ENCODE measurements at regions of chr13 and their contacts with region 1.

Region 1: DNA sequence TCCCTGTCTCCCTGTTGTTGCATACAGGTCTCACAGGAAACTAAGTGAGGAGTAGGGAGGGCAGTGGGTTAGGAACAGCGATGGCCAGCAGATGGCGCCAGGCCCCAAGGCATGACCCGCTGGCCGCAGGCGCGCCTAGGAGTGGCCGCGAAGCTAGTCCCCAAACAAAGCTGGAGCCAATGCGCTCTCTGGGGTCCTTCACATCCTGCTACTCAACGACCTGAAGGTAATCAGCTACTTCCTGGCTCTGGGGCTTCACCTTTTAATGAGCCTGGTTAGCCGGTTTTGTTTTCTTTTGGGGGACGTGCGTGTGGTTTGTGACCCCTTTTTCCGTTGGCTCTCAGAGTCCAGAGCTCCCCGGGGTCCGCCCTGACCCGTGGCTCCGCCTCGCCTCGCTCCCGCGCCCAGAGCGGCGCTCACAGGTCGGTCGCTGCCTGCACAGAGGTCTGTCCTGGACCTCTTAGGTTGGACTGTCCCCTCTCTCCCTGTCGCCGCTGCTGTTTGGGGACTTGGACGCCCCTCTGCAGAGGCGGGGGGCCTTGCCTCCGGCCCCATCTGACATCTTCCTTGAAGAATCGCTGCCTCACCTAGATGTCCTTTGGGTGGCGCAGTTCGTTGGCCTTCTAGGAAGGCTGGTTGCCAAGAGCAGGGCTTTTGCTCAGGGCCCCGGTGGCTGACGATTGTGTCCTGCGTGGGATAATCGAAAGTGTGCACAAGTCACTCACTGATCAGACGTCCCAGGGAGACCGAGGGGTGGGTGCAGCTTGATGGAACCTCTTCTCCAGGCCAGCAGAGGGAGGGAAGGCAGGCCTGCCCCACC is 62.1 kb upstream of the GTF3A start:
- DNase-seq: peak; percentile 57 to 94 (median 86)

Region 2: GRCh38 chr13:26914624-26915023 is 447.6 kb before region 1 on chr13:
- intact Hi-C with region 1: no loop called
- DNase-seq: peak in 10 of 42 donors; percentile 6 to 42 (median 24)

Region 3: DNA sequence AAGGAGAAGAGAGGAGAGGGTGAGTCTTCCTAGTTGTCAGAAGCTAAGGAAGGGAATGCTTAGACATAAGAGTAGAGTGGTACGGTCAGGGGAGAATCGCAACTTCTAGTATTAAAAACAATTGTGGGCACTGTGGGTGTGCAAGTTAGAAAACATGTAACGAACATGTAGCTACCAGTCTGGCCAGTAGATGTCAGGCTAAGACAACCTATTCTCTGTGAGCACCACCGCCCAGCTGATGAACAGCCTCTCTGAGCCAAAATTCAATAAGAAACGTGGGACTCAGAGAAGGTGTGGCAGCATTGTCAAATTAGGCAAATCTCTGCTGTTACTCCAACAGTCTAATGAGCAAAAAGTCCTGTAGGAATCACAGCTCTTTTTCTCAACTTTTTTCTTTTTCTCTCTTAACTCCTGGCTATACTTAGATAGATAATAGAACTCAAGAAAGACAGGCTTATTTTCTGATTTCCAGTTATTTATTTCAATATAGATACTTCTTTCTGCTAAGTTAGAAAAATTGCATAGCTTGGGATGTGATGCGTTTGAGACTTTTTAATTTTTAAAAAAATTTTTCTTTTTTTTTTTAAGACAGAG is 376.9 kb before region 1 on chr13:
- intact Hi-C with region 1: loop called (anchors 2 kb)
- DNase-seq: peak in 41 of 42 donors; percentile 46 to 93 (median 79)

Region 4: DNA sequence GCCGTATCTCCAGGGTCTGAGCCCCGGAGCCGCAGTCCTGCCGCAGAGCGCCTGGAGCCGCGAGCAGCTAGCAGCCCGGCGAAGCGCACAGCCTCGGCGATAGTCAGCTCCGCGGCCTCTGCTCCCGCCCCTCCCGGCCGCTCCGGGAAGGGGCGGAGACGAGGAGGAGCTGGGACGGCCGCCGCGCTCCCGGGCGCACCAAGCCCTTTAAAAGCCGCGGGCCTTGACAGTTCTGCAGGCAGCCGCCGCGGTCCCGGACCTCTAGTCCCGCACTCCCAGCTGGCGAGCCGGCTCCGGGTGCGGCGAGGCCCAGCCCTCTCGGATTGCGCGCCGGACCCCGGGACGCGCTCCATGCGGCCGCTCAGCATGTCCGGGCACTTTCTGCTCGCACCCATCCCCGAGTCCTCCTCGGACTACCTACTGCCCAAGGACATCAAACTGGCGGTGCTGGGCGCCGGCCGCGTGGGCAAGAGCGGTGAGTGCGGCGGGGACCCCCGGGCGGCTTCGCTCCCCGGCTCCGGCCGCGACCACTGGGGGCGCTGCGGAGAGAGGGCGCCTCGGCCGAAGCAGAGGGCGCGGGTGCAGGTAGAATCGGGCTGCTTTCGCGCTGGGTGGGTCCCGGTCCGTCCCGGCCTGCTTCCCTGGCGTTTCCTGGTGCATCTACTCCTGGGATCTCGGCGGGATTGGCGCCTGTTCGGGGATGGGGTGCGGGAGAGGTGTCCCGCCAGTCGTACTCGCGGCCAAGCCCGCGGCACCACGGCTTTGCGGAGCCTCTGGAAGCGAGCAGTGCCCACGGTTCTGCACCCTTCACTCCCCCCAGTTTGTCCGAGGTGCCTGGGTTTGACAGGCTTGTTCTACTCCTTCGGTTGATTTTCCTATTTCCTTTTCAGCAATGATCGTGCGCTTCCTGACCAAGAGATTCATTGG is 91.4 kb before region 1 on chr13 and contains the start of gene RASL11A:
- intact Hi-C with region 1: loop called (anchors 10 kb)
- DNase-seq: peak; percentile 73 to 97 (median 90)

Region 5: DNA sequence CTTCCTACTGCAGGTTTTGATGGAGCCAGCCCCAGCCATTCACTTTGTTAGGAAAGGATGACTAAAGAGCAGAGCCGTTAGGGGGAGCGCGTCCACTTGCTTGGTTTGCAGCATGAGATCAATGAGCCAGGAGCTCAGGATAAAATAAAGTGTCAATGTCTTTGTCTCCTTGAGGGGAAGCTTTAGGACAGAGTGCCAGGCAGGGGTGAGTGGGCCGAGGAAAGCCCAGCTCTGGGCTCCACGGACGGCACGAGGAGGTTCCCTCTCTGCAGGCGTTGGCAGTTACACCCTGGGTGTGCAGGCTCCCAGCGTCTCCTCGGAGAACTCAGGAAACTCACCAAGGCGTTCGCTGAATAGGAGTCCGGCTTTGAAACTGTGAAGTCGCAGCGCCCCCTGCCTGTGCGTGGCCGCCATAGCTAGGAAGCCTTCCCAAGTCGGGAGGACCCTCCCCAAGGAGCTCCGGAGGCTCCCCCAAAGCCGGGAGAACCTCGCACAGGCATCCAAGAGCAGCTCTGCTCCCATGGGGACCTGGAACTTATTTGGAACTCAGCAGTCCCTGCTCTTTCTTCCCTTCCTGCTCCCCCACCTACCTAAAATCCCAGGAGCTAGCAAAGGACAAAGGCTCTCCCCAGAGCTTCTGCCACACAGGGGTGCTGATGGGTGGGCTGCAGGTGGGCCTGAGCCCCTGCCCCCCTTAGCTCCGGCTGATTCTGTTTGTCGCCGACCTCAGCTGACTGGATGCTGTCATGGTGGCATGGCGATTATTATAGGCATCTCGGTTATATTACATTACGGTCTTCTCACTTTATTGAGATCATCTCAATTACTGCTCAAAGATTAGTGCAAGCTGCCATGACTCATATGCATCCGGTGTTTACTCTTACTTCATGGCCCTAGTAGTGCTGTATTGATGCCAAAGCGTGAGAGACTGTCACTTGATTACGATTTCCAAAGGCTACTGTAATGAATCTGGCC is 464.4 kb after region 1 on chr13:
- intact Hi-C with region 1: loop called (anchors 5 kb)
- DNase-seq: peak; percentile 70 to 93 (median 84)

Region 6: DNA sequence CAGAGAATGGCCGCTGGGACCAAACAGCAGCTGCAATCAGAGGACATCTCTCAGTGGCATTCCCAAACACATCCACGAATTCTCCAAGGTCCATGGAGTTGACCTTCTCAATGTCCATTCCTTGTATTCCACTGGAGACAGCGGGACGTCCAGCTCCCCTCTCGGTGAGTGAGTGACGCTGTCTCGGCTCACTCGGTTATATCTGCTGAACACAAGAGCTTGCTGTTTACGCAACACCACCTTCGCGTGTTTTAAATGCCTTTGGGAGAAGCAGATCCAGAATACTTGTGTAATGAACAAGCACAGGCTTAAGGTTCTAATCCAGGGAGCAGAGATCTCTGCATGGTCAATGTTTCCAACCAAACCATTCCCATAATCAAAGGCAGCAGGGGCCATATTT is 626.2 kb after region 1 on chr13 and contains the start of gene URAD:
- intact Hi-C with region 1: loop called (anchors 5 kb)
- DNase-seq: no peak

Measured in head of caudate nucleus (tissue), 42 donors.